Heart left ventricle (tissue), 16 donors: ENCODE measurements at regions of chr21 and their contacts with region 1.

Region 1: GRCh38 chr21:45560106-45561021 is 18.1 kb upstream of the SLC19A1 start:
- DNase-seq: peak in 2 of 5 donors; percentile 9 to 12
- ATAC-seq: no peak
- H3K4me3 ChIP-seq: no peak overlapping the region
- H3K27ac ChIP-seq: no peak overlapping the region
- H3K4me1 ChIP-seq: peaks cover 0 to 10% (median 4%) of the 10 kb centered on the region in 12 donors
- H3K27me3 ChIP-seq: peaks cover 0 to 32% (median 3%) of the 10 kb centered on the region in 9 donors
- CTCF ChIP-seq: no peak
- POLR2A ChIP-seq: no peak

Region 2: DNA sequence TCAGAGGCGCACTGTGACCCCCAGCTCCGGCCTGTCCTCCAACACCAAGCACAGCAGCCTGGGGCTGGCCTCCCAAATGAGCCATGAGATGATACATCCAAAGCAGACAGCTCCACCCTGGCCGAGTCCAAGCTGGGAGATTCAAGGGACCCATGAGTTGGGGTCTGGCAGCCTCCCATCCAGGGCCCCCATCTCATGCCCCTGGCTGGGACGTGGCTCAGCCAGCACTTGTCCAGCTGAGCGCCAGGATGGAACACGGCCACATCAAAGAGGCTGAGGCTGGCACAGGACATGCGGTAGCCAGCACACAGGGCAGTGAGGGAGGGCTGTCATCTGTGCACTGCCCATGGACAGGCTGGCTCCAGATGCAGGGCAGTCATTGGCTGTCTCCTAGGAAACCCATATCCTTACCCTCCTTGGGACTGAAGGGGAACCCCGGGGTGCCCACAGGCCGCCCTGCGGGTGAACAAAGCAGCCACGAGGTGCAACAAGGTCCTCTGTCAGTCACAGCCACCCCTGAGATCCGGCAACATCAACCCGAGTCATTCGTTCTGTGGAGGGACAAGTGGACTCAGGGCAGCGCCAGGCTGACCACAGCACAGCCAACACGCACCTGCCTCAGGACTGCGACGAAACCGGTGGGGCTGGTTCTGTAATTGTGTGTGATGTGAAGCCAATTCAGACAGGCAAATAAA is 47.2 kb before region 1 on chr21:
- intact Hi-C with region 1: no loop called
- DNase-seq: peak in 3 of 5 donors; percentile 15 to 57 (median 24)
- ATAC-seq: peak in 2 of 4 donors; percentile 2 to 16
- H3K4me3 ChIP-seq: no peak overlapping the region
- H3K27ac ChIP-seq: no peak overlapping the region
- H3K4me1 ChIP-seq: peaks cover 0 to 4% (median 0%) of the 10 kb centered on the region in 12 donors
- H3K27me3 ChIP-seq: no peaks in the 10 kb centered on the region
- CTCF ChIP-seq: no peak
- POLR2A ChIP-seq: no peak

Region 3: DNA sequence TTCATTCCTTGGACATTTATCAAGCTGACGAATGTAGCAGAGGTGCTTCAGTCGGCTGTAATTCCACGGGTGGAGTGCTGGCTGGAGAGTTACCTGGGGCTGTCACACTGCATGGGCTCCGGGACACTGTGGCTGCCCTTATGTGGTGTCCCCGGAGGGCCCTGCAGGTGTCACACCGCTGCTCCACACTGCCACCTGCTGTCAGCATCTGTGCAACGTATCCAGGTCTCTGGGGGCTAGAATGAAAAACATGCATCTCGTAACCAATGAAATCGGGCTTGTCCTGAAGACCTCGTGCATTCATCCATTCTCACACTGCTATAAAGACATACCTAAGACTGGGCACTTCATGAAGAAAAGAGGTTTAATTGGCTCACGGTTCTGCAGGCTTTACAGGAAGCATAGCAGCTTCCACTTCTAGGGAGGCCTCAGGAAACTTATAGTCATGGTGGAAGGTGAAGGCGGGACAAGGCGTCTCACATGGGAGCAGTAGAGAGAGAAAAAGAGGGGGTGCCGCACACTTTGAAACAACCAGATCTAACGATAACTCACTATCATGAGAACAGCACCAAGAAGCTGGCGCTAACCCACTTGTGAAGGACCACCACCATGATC is 36.4 kb after region 1 on chr21:
- intact Hi-C with region 1: loop called in 7 of 10 experiments (anchors 1 to 5 kb)
- DNase-seq: peak; percentile 58 to 86 (median 66)
- ATAC-seq: peak in 3 of 4 donors; percentile 82 to 85 (median 85)
- H3K4me3 ChIP-seq: no peak overlapping the region
- H3K27ac ChIP-seq: no peak overlapping the region
- H3K4me1 ChIP-seq: peaks cover 0 to 3% (median 0%) of the 10 kb centered on the region in 12 donors
- H3K27me3 ChIP-seq: peaks cover 0 to 46% (median 5%) of the 10 kb centered on the region in 9 donors
- CTCF ChIP-seq: peak; percentile 63 to 88 (median 74)
- POLR2A ChIP-seq: no peak